Adrenal gland (tissue), 19 donors: ENCODE measurements at regions of chr1 and their contacts with region 1.

Region 1: DNA sequence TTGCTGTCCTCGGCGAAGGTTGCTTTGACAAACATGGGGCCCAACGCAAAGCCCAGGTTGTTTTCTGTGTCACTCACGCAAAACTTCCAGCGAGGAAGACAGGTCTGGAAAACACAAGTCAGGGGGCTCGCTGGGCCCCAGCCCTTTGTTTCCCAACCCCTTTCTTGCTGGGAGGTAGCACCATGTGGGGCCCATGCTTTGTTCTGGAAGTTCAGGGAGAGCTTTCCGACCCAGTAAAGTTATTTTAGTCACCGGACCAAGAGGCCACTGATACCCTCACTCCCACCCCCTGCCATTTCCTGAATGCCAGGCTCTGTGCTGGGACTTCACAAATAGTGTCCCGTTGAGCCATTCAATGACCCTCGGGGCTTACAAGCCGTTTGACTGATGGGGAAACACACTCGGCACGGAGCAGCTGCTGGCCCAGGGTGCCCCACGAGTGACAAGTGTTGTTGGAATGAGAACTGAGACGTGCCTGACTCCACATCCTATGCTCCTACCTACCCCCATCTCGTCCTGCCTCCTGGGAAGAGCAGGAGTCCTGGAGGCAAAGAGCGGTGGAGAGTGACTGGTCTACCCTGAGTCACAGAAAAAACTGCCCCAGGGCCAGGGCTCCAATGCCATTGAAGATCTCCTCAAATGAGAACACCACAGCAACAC is 52.0 kb downstream of the ECE1 start:
- DNase-seq: peak in 4 of 7 donors; percentile 62 to 68 (median 65)
- H3K4me3 ChIP-seq: no peak overlapping the region
- H3K27ac ChIP-seq: peak overlapping the region in 4 of 5 donors; percentile 51 to 89 (median 78)
- H3K4me1 ChIP-seq: peaks cover 14 to 32% of the 10 kb centered on the region in 2 donors
- H3K27me3 ChIP-seq: no peaks in the 10 kb centered on the region
- CTCF ChIP-seq: no peak
- POLR2A ChIP-seq: no peak

Region 2: DNA sequence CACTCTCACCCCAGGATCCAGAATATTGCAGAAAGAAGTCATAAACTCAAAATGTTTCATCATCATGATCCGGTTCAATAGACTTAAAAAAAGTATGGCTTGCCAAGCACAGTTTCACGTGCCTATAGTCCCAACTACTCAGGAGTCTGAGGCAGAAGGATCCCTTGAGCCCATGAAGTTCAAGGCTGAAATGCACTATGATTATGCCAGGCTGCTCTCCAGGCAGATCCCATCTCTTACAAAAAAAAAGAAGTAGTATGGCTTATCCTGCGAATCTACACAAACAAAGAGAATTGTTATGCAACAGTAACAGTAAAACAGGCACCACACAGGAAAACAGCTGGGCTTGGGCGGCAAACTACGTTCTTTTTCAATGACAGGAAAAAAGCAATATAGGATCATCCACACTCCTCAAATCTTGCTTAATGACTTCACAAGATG is 137.8 kb before region 1 on chr1:
- intact Hi-C with region 1: no loop called
- DNase-seq: peak in 4 of 7 donors; percentile 16 to 35 (median 26)
- H3K4me3 ChIP-seq: no peak overlapping the region
- H3K27ac ChIP-seq: peak overlapping the region in 1 of 5 donors; percentile 23
- H3K4me1 ChIP-seq: peaks cover 0 to 21% of the 10 kb centered on the region in 2 donors
- H3K27me3 ChIP-seq: no peaks in the 10 kb centered on the region
- CTCF ChIP-seq: no peak
- POLR2A ChIP-seq: no peak

Region 3: GRCh38 chr1:21362096-21362495 is 123.8 kb after region 1 on chr1:
- intact Hi-C with region 1: loop called in 1 of 2 experiments (anchors 5 kb)
- DNase-seq: no peak
- H3K4me3 ChIP-seq: no peak overlapping the region
- H3K27ac ChIP-seq: no peak overlapping the region
- H3K4me1 ChIP-seq: no peaks in the 10 kb centered on the region
- H3K27me3 ChIP-seq: no peaks in the 10 kb centered on the region
- CTCF ChIP-seq: no peak
- POLR2A ChIP-seq: no peak